ENCODE measurements at regions of chr2 and their contacts with region 1.

Region 1: GRCh38 chr2:170409164-170409535 is 231.2 kb downstream of the MYO3B start:
- DNase-seq: peak; percentile 70
- H3K4me3 ChIP-seq: no peak overlapping the region
- H3K27ac ChIP-seq: no peak overlapping the region
- H3K4me1 ChIP-seq: peaks cover 3% of the 10 kb centered on the region
- H3K27me3 ChIP-seq: peaks cover 10 to 30% of the 10 kb centered on the region in 2 experiments
- CTCF ChIP-seq: peak; percentile 77 to 89
- POLR2A ChIP-seq: no peak

Region 2: DNA sequence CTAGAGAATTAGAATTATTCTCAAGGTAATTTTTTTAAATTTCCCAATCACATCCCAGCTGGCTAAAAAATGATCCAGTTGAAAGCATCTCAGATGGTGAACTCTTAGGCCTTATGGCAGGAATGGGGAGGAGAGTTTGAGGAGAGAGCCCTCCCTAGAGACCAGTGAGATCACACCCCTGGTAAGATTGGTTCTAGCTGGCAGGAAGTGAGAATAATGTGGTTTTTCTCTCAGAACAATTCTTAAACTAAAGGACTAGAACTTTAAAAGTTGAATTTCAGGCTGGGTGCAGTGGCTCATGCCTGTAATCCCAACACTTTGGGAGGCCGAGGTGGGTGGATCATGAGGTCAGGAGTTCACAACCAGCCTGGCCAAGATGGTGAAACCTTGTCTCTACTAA is 111.0 kb before region 1 on chr2:
- CTCF ChIA-PET with region 1: no interaction called
- POLR2A ChIA-PET with region 1: no interaction called
- dilution Hi-C with region 1: no loop called
- intact Hi-C with region 1: no loop called
- DNase-seq: no peak
- H3K4me3 ChIP-seq: no peak overlapping the region
- H3K27ac ChIP-seq: no peak overlapping the region
- H3K4me1 ChIP-seq: no peaks in the 10 kb centered on the region
- H3K27me3 ChIP-seq: peaks cover 3 to 12% of the 10 kb centered on the region in 2 experiments
- CTCF ChIP-seq: no peak
- POLR2A ChIP-seq: no peak

Region 3: DNA sequence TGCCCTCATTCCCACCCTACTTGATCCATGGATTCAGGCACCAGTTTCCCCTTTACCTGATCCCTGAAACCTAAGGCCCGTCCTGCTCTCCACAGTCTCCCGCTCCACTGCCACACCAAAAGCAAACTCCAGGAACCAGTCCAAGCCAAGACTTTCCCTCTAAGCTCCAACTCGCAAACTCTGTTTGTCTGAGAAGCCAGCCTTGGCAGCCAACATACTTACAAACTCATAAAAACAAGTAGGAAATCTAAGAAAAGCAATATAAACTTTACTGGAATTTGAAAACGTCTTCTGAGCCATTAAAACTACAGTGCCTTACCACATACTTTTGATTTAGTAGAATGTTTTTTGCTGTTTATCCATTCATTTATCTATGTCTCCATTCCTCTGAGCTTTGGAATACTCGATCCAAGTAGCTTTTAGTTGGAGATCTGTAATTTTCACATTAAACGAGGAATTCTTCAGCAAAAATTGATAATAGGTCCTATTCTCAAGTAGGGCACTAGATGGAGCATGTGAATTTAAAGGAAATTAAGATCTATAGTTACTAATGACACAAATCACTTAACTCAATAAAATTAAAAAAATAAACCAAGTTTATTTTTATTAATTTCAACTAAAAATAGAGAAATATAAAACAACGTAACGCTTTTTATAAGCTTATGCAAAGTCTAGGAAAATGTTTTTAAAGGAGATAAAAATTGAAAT is 31.5 kb before region 1 on chr2:
- CTCF ChIA-PET with region 1: interaction called, 24 read pairs
- POLR2A ChIA-PET with region 1: no interaction called
- dilution Hi-C with region 1: no loop called
- intact Hi-C with region 1: no loop called
- DNase-seq: no peak
- H3K4me3 ChIP-seq: no peak overlapping the region
- H3K27ac ChIP-seq: no peak overlapping the region
- H3K4me1 ChIP-seq: no peaks in the 10 kb centered on the region
- H3K27me3 ChIP-seq: peaks cover 15 to 30% of the 10 kb centered on the region in 2 experiments
- CTCF ChIP-seq: no peak
- POLR2A ChIP-seq: no peak

Region 4: GRCh38 chr2:170420961-170421687 is 12.0 kb after region 1 on chr2:
- CTCF ChIA-PET with region 1: interaction called, 16 read pairs
- POLR2A ChIA-PET with region 1: no interaction called
- dilution Hi-C with region 1: no loop called
- intact Hi-C with region 1: no loop called
- DNase-seq: no peak
- H3K4me3 ChIP-seq: no peak overlapping the region
- H3K27ac ChIP-seq: no peak overlapping the region
- H3K4me1 ChIP-seq: no peaks in the 10 kb centered on the region
- H3K27me3 ChIP-seq: peaks cover 0 to 3% of the 10 kb centered on the region in 2 experiments
- CTCF ChIP-seq: no peak
- POLR2A ChIP-seq: no peak

Region 5: DNA sequence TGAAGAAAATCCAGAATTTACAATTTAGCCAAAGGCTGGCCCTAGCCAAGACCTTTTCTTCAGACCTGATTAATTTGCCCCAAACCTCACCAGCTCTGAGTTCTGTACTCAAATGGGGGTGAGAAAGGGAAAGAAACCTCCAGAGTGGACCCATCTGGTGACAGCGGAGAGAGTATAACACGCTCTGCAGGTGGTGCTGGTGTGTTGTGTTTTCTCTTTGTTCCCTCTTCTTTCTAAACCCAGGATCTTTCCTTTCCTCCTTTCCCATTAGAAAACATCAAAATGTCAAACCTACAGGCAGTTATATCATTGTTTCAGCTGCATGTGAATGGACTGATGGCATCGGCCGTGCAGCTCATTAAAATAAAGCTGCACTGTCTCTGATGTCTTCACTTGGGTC is 52.7 kb after region 1 on chr2:
- CTCF ChIA-PET with region 1: no interaction called
- POLR2A ChIA-PET with region 1: no interaction called
- dilution Hi-C with region 1: no loop called
- intact Hi-C with region 1: no loop called
- DNase-seq: peak; percentile 12
- H3K4me3 ChIP-seq: no peak overlapping the region
- H3K27ac ChIP-seq: no peak overlapping the region
- H3K4me1 ChIP-seq: no peaks in the 10 kb centered on the region
- H3K27me3 ChIP-seq: no peaks in the 10 kb centered on the region
- CTCF ChIP-seq: peak in 1 of 2 donors; percentile 18
- POLR2A ChIP-seq: no peak

Region 6: DNA sequence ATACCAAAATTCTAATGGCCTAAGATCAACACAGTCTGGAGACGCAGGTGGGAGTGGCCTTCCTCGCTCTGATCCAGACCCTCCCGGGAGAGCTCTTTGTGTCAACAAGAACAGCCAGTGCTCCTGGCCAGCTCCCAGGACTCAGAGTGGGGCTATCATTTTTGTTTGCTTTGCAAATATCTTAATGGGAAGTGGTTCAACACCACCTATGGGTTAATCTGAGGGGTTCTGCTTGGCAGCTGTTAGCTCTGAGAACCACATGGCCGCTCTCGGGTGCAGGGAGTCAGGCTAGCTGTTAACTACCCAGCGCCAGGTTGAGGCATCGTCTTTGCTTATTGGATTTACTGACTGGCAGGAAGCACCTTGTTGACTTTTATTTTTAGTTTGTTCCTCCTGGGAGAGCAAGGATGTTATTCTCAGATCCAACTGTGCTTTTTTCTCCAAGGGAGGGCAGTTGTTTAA is 121.2 kb after region 1 on chr2:
- CTCF ChIA-PET with region 1: no interaction called
- POLR2A ChIA-PET with region 1: no interaction called
- dilution Hi-C with region 1: no loop called
- intact Hi-C with region 1: loop called (anchors 5 kb)
- DNase-seq: peak; percentile 75
- H3K4me3 ChIP-seq: peak overlapping the region in 1 of 3 experiments; percentile 29
- H3K27ac ChIP-seq: no peak overlapping the region
- H3K4me1 ChIP-seq: peaks cover 21% of the 10 kb centered on the region
- H3K27me3 ChIP-seq: no peaks in the 10 kb centered on the region
- CTCF ChIP-seq: no peak
- POLR2A ChIP-seq: no peak

Region 7: GRCh38 chr2:170715062-170715931 is 306.1 kb after region 1 on chr2 and contains the start of gene SP5:
- CTCF ChIA-PET with region 1: interaction called, 20 read pairs
- POLR2A ChIA-PET with region 1: no interaction called
- dilution Hi-C with region 1: no loop called
- intact Hi-C with region 1: loop called (anchors 1 kb)
- DNase-seq: peak; percentile 49
- H3K4me3 ChIP-seq: peak within 1 kb of the TSS; percentile 17 to 63 (median 30)
- H3K27ac ChIP-seq: no peak within 1 kb of the TSS
- H3K4me1 ChIP-seq: peaks cover 19% of the 10 kb centered on the region
- H3K27me3 ChIP-seq: peaks cover 67 to 97% of the 10 kb centered on the region in 2 experiments
- CTCF ChIP-seq: no peak
- POLR2A ChIP-seq: no peak
- total RNA-seq, gene SP5: not detected in 2 replicates